Naive thymus-derived CD4-positive, alpha-beta T cell (primary cell): ENCODE measurements at regions of chr9 and their contacts with region 1.

Region 1: DNA sequence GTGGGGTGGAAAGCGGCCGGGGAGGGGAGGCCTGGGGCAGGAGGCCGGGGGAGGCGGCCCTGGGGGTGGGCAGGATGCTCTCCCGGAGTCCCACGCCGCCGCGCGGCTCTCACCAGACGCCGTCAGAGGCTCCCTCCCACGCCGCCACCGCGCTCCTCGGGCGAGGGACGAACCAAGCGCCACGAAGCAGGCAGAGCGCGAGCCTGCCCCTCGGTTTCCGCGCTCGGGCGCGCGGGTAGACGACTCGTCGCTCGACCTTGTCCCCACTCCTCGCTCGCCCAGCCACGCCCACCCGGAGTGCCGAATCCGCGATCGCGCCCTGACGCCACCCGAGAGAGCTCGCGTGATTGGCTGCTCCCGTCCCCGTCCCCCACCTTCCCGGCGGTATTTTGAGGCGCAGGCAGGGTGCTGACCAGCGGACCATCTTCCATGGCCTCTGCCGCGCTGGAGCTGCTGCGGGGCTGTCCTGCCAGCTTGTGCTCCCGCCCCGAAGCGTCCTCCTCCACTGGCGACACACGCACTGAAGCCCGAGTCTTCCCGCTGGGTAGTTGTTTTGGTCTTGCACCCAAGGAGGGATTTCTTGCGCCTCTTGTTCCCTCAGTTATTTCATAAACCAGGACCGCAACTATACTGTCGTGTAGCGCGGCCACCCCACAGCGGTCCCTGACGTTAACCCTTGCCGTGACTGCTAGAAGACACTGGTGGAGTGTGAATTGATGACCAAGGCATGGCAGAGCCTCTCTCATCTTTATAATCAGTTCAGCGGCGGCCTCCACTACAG is at the start of gene GNE:
- DNase-seq: peak; percentile 92 to 99 (median 96)
- ATAC-seq: peak; percentile 96
- H3K4me3 ChIP-seq: peak within 1 kb of the TSS; percentile 98
- H3K4me3 Mint-ChIP-seq: peak within 1 kb of the TSS; percentile 96 to 100 (median 98)
- H3K27ac ChIP-seq: peak within 1 kb of the TSS; percentile 93
- H3K27ac Mint-ChIP-seq: peak within 1 kb of the TSS; percentile 92 to 98 (median 96)
- H3K4me1 ChIP-seq: peaks cover 7 to 9% of the 10 kb centered on the region in 2 donors
- H3K4me1 Mint-ChIP-seq: peaks cover 0 to 14% (median 12%) of the 10 kb centered on the region in 7 donors
- H3K27me3 ChIP-seq: no peaks in the 10 kb centered on the region
- H3K27me3 Mint-ChIP-seq: peaks cover 0 to 2% (median 0%) of the 10 kb centered on the region in 5 donors
- total RNA-seq, gene GNE: 12.6 to 18.5 (median 16.0) TPM

Region 2: GRCh38 chr9:36136272-36136893 is 122.0 kb before region 1 on chr9 and contains the start of gene GLIPR2:
- CTCF ChIA-PET with region 1: no interaction called
- POLR2A ChIA-PET with region 1: no interaction called
- intact Hi-C with region 1: loop called in 1 of 2 experiments (anchors 5 kb)
- DNase-seq: peak; percentile 60 to 88 (median 69)
- ATAC-seq: peak; percentile 97
- H3K4me3 ChIP-seq: peak within 1 kb of the TSS; percentile 78
- H3K4me3 Mint-ChIP-seq: peak within 1 kb of the TSS; percentile 83 to 99 (median 93)
- H3K27ac ChIP-seq: peak within 1 kb of the TSS; percentile 74
- H3K27ac Mint-ChIP-seq: peak within 1 kb of the TSS; percentile 25 to 94 (median 87)
- H3K4me1 ChIP-seq: peaks cover 43 to 49% of the 10 kb centered on the region in 2 donors
- H3K4me1 Mint-ChIP-seq: peaks cover 43 to 52% (median 49%) of the 10 kb centered on the region in 7 donors
- H3K27me3 ChIP-seq: no peaks in the 10 kb centered on the region
- H3K27me3 Mint-ChIP-seq: peaks cover 0 to 39% (median 0%) of the 10 kb centered on the region in 5 donors
- total RNA-seq, gene GLIPR2: 7.7 to 74.7 (median 18.6) TPM

Region 3: GRCh38 chr9:36572515-36573418 is 314.4 kb after region 1 on chr9 and contains the start of gene MELK:
- CTCF ChIA-PET with region 1: no interaction called
- POLR2A ChIA-PET with region 1: no interaction called
- intact Hi-C with region 1: loop called (anchors 1 kb)
- DNase-seq: peak; percentile 69 to 94 (median 82)
- ATAC-seq: peak; percentile 97
- H3K4me3 ChIP-seq: peak within 1 kb of the TSS; percentile 83
- H3K4me3 Mint-ChIP-seq: peak within 1 kb of the TSS; percentile 88 to 95 (median 90)
- H3K27ac ChIP-seq: peak within 1 kb of the TSS; percentile 76
- H3K27ac Mint-ChIP-seq: peak within 1 kb of the TSS; percentile 62 to 90 (median 83)
- H3K4me1 ChIP-seq: peaks cover 0 to 5% of the 10 kb centered on the region in 2 donors
- H3K4me1 Mint-ChIP-seq: peaks cover 7 to 38% (median 13%) of the 10 kb centered on the region in 7 donors
- H3K27me3 ChIP-seq: no peaks in the 10 kb centered on the region
- H3K27me3 Mint-ChIP-seq: peaks cover 0 to 5% (median 0%) of the 10 kb centered on the region in 5 donors
- total RNA-seq, gene MELK: 0.22 to 40.2 (median 0.88) TPM in 3 of 5 experiments, not detected in the others